Vagina (tissue), 2 donors: ENCODE measurements at regions of chr22 and their contacts with region 1.

Region 1: DNA sequence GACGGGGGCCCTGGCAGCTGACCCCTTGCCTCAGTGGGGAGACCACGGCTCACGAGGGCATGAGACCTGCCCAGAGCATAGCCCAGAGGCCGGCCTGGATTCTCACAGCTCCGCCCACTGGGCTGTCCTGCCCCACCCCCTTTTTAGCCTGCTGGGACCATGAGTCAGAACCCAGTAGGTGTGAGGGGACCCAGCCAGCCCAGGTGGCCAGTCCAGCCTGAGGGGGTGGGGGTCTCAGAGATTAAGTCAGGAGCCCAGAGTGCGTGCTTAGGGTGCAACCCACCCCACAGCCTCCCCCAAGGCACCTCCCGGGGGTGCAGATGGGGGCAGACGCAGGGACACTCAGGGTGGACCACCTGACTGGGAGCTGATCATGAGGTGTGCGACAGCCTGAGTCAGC is 40.1 kb upstream of the PPARA start:
- DNase-seq: no peak
- H3K4me3 ChIP-seq: no peak overlapping the region
- H3K27ac ChIP-seq: peak overlapping the region; percentile 80
- H3K4me1 ChIP-seq: peaks cover 98% of the 10 kb centered on the region
- H3K27me3 ChIP-seq: no peaks in the 10 kb centered on the region
- CTCF ChIP-seq: no peak
- POLR2A ChIP-seq: no peak

Region 2: DNA sequence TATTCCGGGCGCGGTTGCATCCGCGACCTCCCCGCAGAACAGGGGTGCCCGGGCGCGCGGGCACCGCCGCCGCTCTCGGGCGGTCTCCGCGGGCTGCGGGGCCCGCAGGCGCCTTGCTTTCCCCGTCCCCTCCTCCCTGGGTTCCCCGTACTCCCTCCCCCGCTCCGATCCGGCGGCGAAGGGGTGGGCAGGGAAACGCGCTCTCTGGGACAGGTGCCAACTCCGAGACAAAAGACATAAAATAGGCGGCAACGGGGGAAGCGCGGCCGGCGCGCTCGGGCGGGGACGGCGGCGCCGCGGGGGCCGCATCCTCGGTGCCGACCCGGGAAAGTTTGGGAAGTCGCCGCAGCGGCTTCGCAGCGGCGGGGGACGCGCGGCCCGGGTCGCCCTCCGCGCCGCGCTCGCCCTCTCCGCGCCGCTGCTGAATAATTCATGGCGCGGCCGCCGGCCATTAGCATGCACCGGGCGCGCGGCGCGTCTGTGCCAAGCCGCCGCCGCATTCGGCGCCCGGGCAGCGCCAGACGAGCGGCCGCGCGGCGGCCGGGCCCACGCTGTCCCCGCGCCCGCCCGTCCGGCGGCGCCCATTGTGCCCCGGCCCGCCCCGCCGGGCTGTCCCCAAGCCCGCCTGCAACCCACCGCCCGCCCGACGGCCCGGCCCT is 38.6 kb before region 1 on chr22:
- intact Hi-C with region 1: loop called (anchors 5 kb)
- DNase-seq: no peak
- H3K4me3 ChIP-seq: peak overlapping the region; percentile 82 to 95
- H3K27ac ChIP-seq: peak overlapping the region; percentile 100
- H3K4me1 ChIP-seq: peaks cover 48% of the 10 kb centered on the region
- H3K27me3 ChIP-seq: no peaks in the 10 kb centered on the region
- CTCF ChIP-seq: no peak
- POLR2A ChIP-seq: peak in 1 of 2 donors; percentile 61